CD4-positive, alpha-beta T cell (primary cell): ENCODE measurements at regions of chr17 and their contacts with region 1.

Region 1: DNA sequence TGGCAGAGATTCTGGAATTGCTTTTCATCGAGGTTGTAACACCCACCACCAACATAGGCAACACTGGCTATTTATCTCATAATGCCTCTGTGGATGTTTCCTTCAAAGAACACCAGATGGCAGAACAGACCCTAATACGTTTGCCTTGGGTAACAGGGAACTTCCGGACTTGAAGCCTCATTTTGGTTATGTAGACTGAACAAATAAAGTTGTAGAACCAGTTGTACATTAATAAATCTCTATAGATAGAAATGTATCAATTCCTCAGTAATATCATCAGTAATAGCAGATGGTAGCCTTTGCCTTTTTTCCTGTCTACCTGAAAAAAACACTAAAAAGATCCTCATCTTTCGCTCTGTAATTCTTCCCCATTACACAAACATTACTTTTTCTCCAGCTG is 25.9 kb upstream of the APOH start:
- DNase-seq: peak in 8 of 14 experiments; percentile 21 to 87 (median 42)
- ATAC-seq: peak; percentile 95
- H3K4me3 ChIP-seq: no peak overlapping the region
- H3K4me3 Mint-ChIP-seq: peak overlapping the region; percentile 59
- H3K27ac ChIP-seq: peak overlapping the region in 1 of 2 donors; percentile 15
- H3K27ac Mint-ChIP-seq: peak overlapping the region; percentile 82
- H3K4me1 ChIP-seq: peaks cover 8% of the 10 kb centered on the region
- H3K4me1 Mint-ChIP-seq: peaks cover 23% of the 10 kb centered on the region
- H3K27me3 ChIP-seq: no peaks in the 10 kb centered on the region
- H3K27me3 Mint-ChIP-seq: no peaks in the 10 kb centered on the region
- CTCF ChIP-seq: peak; percentile 82

Region 2: DNA sequence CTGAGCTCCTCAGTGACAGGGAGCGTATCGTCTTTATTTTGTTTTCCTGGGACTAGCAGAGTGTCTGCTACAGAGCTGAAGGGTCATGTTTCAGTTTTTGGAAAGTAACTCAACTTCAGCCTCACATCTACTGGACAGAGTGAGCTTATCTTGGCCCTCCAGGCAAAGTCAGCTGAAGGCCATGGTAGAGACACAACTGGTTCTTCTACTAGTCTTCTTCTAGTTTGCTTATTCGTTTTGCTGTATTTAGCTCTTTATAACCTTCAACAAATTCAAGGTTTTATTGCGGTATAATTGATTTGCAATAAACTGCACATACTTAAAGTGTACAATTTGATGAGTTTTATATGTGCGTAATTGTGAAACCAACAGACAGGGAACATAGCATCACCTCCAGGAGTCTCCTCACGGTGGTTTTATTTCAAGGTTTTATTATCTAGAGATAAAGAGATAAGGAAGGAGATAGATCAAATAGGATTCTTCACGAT is 41.2 kb after region 1 on chr17:
- CTCF ChIA-PET with region 1: no interaction called
- POLR2A ChIA-PET with region 1: interaction called, 4 read pairs
- intact Hi-C with region 1: loop called (anchors 5 kb)
- DNase-seq: no peak
- ATAC-seq: no peak
- H3K4me3 ChIP-seq: no peak overlapping the region
- H3K4me3 Mint-ChIP-seq: no peak overlapping the region
- H3K27ac ChIP-seq: no peak overlapping the region
- H3K27ac Mint-ChIP-seq: peak overlapping the region; percentile 16
- H3K4me1 ChIP-seq: peaks cover 8% of the 10 kb centered on the region
- H3K4me1 Mint-ChIP-seq: peaks cover 46% of the 10 kb centered on the region
- H3K27me3 ChIP-seq: no peaks in the 10 kb centered on the region
- H3K27me3 Mint-ChIP-seq: no peaks in the 10 kb centered on the region
- CTCF ChIP-seq: no peak

Region 3: DNA sequence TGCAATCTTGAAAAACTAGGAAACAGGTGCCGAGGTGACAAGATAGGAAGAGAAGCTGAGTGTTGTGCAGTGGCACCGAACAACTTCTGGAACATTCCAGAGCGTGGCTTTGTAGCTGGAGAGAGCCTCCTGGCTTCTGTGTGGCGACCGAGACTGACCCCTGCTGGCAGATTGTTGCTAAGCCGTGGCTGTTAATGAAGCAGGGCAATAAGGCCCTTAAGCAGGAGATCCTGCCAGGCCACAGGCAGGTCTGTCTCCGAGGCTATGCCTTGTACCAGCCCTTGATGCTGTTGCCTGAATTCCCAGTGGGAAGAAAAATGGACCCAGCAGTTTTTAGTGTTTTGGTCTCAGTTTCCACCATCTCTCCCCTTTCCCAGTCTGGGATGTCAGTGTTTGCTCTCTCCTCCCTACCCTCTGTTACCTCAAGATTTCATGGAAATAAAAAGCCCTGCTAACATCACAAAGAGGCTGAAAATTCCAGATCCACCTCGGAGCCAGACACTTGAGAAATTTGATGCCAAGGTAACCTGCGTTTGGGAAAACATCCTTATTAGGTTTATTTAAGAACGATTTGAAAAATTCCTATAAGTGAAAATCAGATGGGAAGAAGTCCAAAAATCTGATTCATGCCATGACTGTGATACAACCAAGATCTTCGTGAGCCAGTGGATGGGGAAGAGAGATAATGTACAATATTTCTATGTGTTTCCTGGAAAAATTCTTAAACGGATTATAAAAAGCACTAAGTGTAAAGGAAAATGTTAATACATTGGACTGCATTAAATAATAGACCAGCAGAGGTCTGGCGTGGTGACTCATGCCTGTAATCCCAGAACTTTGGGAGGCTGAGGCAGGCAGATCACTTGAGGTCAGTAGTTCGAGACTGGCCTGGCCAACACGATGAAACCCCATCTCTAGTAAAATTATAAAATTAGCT is 312.4 kb after region 1 on chr17:
- CTCF ChIA-PET with region 1: interaction called, 6 read pairs
- POLR2A ChIA-PET with region 1: interaction called, 4 read pairs
- intact Hi-C with region 1: loop called (anchors 1 kb)
- DNase-seq: peak; percentile 71 to 90 (median 80)
- ATAC-seq: peak; percentile 88
- H3K4me3 ChIP-seq: no peak overlapping the region
- H3K4me3 Mint-ChIP-seq: no peak overlapping the region
- H3K27ac ChIP-seq: no peak overlapping the region
- H3K27ac Mint-ChIP-seq: peak overlapping the region; percentile 7
- H3K4me1 ChIP-seq: peaks cover 5% of the 10 kb centered on the region
- H3K4me1 Mint-ChIP-seq: peaks cover 41% of the 10 kb centered on the region
- H3K27me3 ChIP-seq: no peaks in the 10 kb centered on the region
- H3K27me3 Mint-ChIP-seq: no peaks in the 10 kb centered on the region
- CTCF ChIP-seq: peak; percentile 87

Region 4: GRCh38 chr17:66625311-66625775 is 370.2 kb after region 1 on chr17:
- CTCF ChIA-PET with region 1: no interaction called
- POLR2A ChIA-PET with region 1: no interaction called
- intact Hi-C with region 1: loop called in 1 of 2 experiments (anchors 1 kb)
- DNase-seq: peak in 1 of 14 experiments; percentile 8
- ATAC-seq: peak; percentile 44
- H3K4me3 ChIP-seq: no peak overlapping the region
- H3K4me3 Mint-ChIP-seq: no peak overlapping the region
- H3K27ac ChIP-seq: no peak overlapping the region
- H3K27ac Mint-ChIP-seq: peak overlapping the region; percentile 62
- H3K4me1 ChIP-seq: no peaks in the 10 kb centered on the region
- H3K4me1 Mint-ChIP-seq: peaks cover 62% of the 10 kb centered on the region
- H3K27me3 ChIP-seq: no peaks in the 10 kb centered on the region
- H3K27me3 Mint-ChIP-seq: no peaks in the 10 kb centered on the region
- CTCF ChIP-seq: no peak